ENCODE measurements at regions of chr13 and their contacts with region 1.

Region 1: DNA sequence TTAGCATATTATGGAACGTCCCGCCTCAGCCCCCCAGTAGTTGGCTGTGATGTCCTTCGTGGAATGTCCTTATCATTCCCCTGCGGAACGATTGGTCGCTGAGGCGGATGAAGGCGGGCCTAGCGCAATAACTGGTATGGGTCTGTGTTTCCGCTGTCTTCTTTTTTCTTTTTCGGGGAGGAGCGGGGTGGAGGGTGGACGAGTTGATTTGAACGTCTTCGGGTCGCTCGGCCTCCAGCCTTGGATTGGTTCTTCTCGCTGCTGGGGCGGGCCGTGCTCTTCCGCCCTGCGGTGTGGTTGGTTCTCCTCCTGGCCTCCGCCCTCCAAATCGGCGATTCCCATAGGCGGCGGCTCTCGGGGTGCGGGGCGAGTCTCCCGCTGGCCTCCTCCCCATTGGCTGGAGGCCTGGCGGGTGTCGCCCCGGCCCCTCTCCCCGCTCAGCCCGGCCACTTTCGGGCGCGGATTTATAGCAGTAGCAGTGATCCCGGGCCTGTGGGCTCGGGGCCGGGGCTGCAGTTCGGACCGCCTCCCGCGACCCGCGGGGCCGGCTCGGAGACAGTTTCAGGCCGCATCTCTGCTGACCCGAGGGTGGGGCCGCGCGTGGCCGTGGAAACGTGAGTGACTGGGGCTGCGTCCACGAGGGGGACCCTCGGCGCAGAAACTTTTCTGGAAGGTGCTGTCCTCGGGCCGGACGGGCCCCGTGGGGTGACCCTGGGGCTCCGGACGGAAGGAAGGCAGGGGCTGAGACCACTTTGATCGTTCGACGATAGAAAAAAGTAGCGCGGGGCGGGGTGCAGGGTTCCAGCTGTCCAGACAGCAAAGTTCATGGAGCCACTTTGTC is 2.1 kb downstream of the ING1 start:
- DNase-seq: peak; percentile 96
- CTCF ChIP-seq: no peak

Region 2: GRCh38 chr13:110615322-110616102 is 100.1 kb before region 1 on chr13 and contains the start of gene NAXD:
- CTCF ChIA-PET with region 1: no interaction called
- POLR2A ChIA-PET with region 1: interaction called, 11 read pairs
- DNase-seq: peak; percentile 97
- CTCF ChIP-seq: no peak

Region 3: GRCh38 chr13:110680851-110681250 is 34.8 kb before region 1 on chr13:
- CTCF ChIA-PET with region 1: interaction called, 5 read pairs
- POLR2A ChIA-PET with region 1: interaction called, 13 read pairs
- DNase-seq: peak; percentile 33
- CTCF ChIP-seq: peak; percentile 43